Activated naive CD4-positive, alpha-beta T cell treated with anti-CD3 and anti-CD28 coated beads, Interleukin-2, amount 10 ng/mL, durations not matched to agents 7 days and 5 days (primary cell): ENCODE measurements at regions of chr17 and their contacts with region 1.

Region 1: GRCh38 chr17:2025622-2026310 is 632 bp upstream of the RTN4RL1 start:
- DNase-seq: peak; percentile 57
- H3K4me3 Mint-ChIP-seq: peak overlapping the region; percentile 76
- H3K27ac Mint-ChIP-seq: no peak overlapping the region
- H3K4me1 Mint-ChIP-seq: peaks cover 34% of the 10 kb centered on the region
- H3K27me3 Mint-ChIP-seq: peaks cover 94% of the 10 kb centered on the region

Region 2: DNA sequence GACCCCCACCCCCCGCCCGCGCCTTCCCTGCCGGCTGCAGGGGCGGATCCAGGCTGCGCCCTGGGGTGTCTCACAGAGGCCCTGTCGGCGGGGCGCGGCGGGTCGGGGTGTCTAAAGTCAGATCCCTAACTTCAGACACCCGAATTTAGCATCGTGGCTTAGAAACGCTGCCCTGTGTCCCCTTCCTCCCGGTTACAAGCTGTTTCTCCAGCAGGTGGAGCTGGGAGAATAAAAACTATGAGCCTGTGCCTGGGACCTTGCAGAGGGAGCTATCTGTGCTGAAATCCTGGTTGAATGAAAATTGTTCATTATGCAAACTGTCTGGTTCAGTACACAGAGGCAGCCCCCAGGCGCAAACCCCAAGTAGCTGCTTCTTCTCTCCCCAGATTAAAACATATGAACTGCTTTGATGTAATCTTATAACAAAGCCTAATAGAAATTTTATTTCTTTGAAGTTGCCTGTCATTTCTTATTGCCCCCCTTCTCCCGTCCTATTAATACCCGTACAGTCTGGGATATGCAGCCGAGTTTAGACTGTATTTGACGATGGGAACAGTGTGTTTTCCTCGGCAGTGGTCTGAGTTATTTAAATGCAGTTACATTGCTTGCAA is 117.0 kb before region 1 on chr17:
- CTCF ChIA-PET with region 1: interaction called, 16 read pairs
- DNase-seq: peak; percentile 70
- H3K4me3 Mint-ChIP-seq: no peak overlapping the region
- H3K27ac Mint-ChIP-seq: no peak overlapping the region
- H3K4me1 Mint-ChIP-seq: peaks cover 13% of the 10 kb centered on the region
- H3K27me3 Mint-ChIP-seq: peaks cover 94% of the 10 kb centered on the region

Region 3: DNA sequence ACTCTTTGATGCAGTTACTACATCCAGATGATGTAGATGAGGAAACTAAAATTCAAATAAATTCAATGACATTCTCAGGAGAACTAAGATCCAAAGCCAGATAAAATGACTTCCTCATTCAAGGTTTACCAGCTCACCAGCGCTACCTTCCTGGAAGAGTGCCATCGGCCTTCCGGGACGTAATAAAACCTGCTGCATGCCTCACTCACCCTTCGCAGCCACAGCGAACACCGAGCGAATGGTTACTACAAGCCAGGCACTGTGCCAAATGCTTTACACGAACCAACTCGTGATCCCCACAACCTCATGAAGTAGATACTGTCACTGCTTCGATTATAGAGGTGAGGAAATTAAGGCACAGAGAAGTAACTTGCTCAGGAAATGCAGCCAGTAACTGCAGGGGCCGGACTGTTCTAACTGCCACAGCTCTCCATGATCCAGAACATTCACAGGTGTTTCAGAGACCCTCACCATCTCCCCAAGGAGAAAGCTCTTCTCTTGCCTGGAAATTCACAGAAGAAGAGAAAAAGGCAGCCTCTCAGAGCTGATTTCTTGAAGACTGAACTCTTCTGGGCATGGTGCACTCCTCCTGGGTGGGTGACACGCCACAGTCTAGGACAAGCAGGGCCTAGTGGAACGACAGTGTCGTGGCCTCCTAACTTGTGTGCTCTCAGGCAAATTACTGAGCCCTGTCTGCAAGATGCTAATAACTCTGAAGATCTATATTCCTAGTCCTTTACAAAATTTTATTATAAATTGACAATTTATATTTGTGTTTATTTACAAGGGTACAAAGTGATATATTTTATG is 75.9 kb after region 1 on chr17:
- CTCF ChIA-PET with region 1: no interaction called
- DNase-seq: peak; percentile 59
- H3K4me3 Mint-ChIP-seq: peak overlapping the region; percentile 31
- H3K27ac Mint-ChIP-seq: peak overlapping the region; percentile 84
- H3K4me1 Mint-ChIP-seq: peaks cover 62% of the 10 kb centered on the region
- H3K27me3 Mint-ChIP-seq: no peaks in the 10 kb centered on the region